ENCODE measurements at regions of chr7 and their contacts with region 1.

Region 1: GRCh38 chr7:74417419-74417971 is 36.2 kb upstream of the GTF2IRD1 start:
- DNase-seq: peak; percentile 61
- ATAC-seq: peak; percentile 99
- H3K4me3 ChIP-seq: no peak overlapping the region
- H3K27ac ChIP-seq: no peak overlapping the region
- H3K4me1 ChIP-seq: peaks cover 1% of the 10 kb centered on the region; the same call in 1 of the 2 replicates
- H3K27me3 ChIP-seq: no peaks in the 10 kb centered on the region
- CTCF ChIP-seq: peak; percentile 96
- POLR2A ChIP-seq: peak; percentile 57
- RAD21 ChIP-seq: peak; percentile 99

Region 2: GRCh38 chr7:74544706-74545469 is 127.4 kb after region 1 on chr7:
- CTCF ChIA-PET with region 1: no interaction called
- POLR2A ChIA-PET with region 1: no interaction called
- dilution Hi-C with region 1: no loop called
- in situ Hi-C with region 1: no loop called
- intact Hi-C with region 1: loop called (anchors 2 kb)
- DNase-seq: peak; percentile 64
- ATAC-seq: peak; percentile 88
- H3K4me3 ChIP-seq: no peak overlapping the region
- H3K27ac ChIP-seq: no peak overlapping the region
- H3K4me1 ChIP-seq: no peaks in the 10 kb centered on the region
- H3K27me3 ChIP-seq: no peaks in the 10 kb centered on the region
- CTCF ChIP-seq: peak; percentile 67
- POLR2A ChIP-seq: no peak
- RAD21 ChIP-seq: peak; percentile 70

Region 3: GRCh38 chr7:74569501-74570075 is 152.1 kb after region 1 on chr7:
- CTCF ChIA-PET with region 1: interaction called, 5 read pairs
- POLR2A ChIA-PET with region 1: no interaction called
- dilution Hi-C with region 1: no loop called
- in situ Hi-C with region 1: no loop called
- intact Hi-C with region 1: loop called (anchors 2 kb)
- DNase-seq: no peak
- ATAC-seq: no peak
- H3K4me3 ChIP-seq: no peak overlapping the region
- H3K27ac ChIP-seq: no peak overlapping the region
- H3K4me1 ChIP-seq: no peaks in the 10 kb centered on the region
- H3K27me3 ChIP-seq: no peaks in the 10 kb centered on the region
- CTCF ChIP-seq: no peak
- POLR2A ChIP-seq: no peak
- RAD21 ChIP-seq: no peak

Region 4: DNA sequence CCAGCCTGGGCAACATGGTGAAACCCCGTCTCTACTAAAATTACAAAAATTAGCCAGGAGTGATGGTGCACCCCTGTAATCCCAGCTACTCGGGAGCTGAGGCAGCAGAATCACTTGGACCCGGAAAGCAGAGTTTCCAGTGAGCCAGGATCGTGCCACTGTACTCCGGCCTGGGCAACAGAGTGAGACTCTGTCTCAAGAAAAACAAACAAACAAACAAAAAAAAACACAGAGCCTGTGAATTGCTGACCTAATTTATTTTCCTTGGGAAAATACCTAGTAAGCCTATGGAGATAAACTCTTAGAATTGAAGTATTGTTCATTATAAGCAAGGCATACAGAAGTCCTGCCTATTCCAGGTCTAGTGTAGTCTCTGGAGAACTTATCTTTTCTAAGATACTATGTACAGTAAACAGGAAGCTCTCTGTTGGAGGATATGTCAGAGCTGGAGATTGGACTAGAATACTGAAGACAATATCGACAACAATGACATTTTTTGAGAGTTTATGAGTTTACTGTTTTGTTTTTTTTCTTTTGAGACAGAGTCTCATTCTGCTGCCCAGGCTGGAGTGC is 254.9 kb after region 1 on chr7:
- CTCF ChIA-PET with region 1: no interaction called
- POLR2A ChIA-PET with region 1: no interaction called
- dilution Hi-C with region 1: no loop called
- in situ Hi-C with region 1: no loop called
- intact Hi-C with region 1: loop called (anchors 10 kb)
- DNase-seq: no peak
- ATAC-seq: 0 out of 2 replicates have a peak, but pooled peaks have one; percentile 18
- H3K4me3 ChIP-seq: no peak overlapping the region
- H3K27ac ChIP-seq: no peak overlapping the region
- H3K4me1 ChIP-seq: peaks cover 7% of the 10 kb centered on the region
- H3K27me3 ChIP-seq: no peaks in the 10 kb centered on the region
- CTCF ChIP-seq: no peak
- POLR2A ChIP-seq: no peak
- RAD21 ChIP-seq: no peak